Colonic mucosa (tissue), 4 donors: ENCODE measurements at regions of chr12 and their contacts with region 1.

Region 1: GRCh38 chr12:25958428-25959070 is at the start of gene RASSF8:
- DNase-seq: peak; percentile 49
- H3K4me3 ChIP-seq: peak within 1 kb of the TSS; percentile 52
- H3K27ac ChIP-seq: peak within 1 kb of the TSS; percentile 77
- H3K4me1 ChIP-seq: no peaks in the 10 kb centered on the region
- H3K27me3 ChIP-seq: peaks cover 16% of the 10 kb centered on the region
- CTCF ChIP-seq: no peak
- total RNA-seq, gene RASSF8: 3.2 to 14.2 TPM

Region 2: GRCh38 chr12:26017484-26018206 is 59.1 kb after region 1 on chr12:
- intact Hi-C with region 1: loop called (anchors 10 kb)
- DNase-seq: peak; percentile 29
- H3K4me3 ChIP-seq: no peak overlapping the region
- H3K27ac ChIP-seq: no peak overlapping the region
- H3K4me1 ChIP-seq: no peaks in the 10 kb centered on the region
- H3K27me3 ChIP-seq: no peaks in the 10 kb centered on the region
- CTCF ChIP-seq: peak; percentile 48